HCT116 (cell line): ENCODE measurements at regions of chr1 and their contacts with region 1.

Region 1: GRCh38 chr1:111656086-111657017 is 36.8 kb downstream of the RAP1A start:
- DNase-seq: peak; percentile 57
- ATAC-seq: peak; percentile 62; the same call in 1 of the 2 replicates
- H3K4me3 ChIP-seq: no peak overlapping the region
- H3K27ac ChIP-seq: no peak overlapping the region
- H3K4me1 ChIP-seq: no peaks in the 10 kb centered on the region
- H3K27me3 ChIP-seq: no peaks in the 10 kb centered on the region
- CTCF ChIP-seq: peak; percentile 48 to 75 (median 69)
- POLR2A ChIP-seq: no peak
- RAD21 ChIP-seq: peak; percentile 84

Region 2: DNA sequence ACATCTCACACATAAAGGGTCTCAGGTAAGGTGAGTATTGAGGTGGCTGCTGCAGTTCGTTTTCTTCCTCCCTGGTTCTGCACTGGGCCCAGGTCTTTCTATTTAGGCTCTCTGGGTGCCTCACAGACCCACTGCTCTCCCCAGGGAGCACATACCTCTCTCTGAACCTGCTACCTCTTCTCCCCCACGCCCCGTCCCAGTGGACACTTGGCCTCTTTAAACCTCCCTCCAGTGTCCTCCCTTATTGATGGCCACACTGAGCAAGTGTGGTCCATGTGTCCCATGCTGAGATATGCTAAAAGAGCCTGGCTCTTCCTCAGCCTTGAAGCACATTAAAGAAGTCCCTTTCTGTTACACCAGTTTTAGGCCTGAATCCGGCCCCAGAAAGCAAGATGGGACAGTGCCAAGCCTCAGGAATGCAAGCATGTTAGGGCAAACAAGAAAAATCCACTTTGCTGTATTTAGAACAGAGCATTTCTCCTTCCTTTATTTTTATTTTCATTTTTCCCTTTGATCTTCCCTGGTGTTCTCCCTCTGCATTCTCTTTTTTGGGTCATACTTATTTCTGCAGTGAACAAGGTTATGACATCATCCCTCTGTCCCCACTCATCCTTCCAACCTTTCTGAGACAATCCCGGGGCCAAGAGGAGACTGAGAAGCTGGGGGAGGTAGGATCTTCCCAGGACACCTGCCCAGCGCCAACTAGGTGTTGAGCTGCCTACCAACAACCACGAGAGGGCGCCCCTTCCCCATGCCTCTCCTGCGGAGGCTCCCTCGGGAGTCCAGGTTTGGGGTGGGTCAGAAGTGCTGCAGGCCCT is 433.8 kb before region 1 on chr1:
- CTCF ChIA-PET with region 1: no interaction called
- POLR2A ChIA-PET with region 1: no interaction called
- RAD21 ChIA-PET with region 1: no interaction called
- intact Hi-C with region 1: loop called (anchors 5 kb)
- DNase-seq: peak; percentile 70
- ATAC-seq: peak; percentile 100
- H3K4me3 ChIP-seq: no peak overlapping the region
- H3K27ac ChIP-seq: no peak overlapping the region
- H3K4me1 ChIP-seq: peaks cover 3 to 5% of the 10 kb centered on the region in 2 experiments; a peak in 2 of 4 replicates
- H3K27me3 ChIP-seq: no peaks in the 10 kb centered on the region
- CTCF ChIP-seq: peak; percentile 90 to 98 (median 95)
- POLR2A ChIP-seq: no peak
- RAD21 ChIP-seq: peak; percentile 98

Region 3: GRCh38 chr1:111346089-111346885 is 310.1 kb before region 1 on chr1:
- CTCF ChIA-PET with region 1: no interaction called
- POLR2A ChIA-PET with region 1: no interaction called
- RAD21 ChIA-PET with region 1: no interaction called
- intact Hi-C with region 1: loop called (anchors 10 kb)
- DNase-seq: peak; percentile 58
- ATAC-seq: peak; percentile 94
- H3K4me3 ChIP-seq: peak overlapping the region; percentile 51 to 60
- H3K27ac ChIP-seq: peak overlapping the region; percentile 31; the same call in 1 of the 2 replicates
- H3K4me1 ChIP-seq: peaks cover 6 to 12% of the 10 kb centered on the region in 2 experiments; a peak in 2 of 4 replicates
- H3K27me3 ChIP-seq: no peaks in the 10 kb centered on the region
- CTCF ChIP-seq: 0 out of 6 replicates have a peak, but pooled peaks of 1 of the 3 experiments have one; percentile 5
- POLR2A ChIP-seq: no peak
- RAD21 ChIP-seq: no peak

Region 4: DNA sequence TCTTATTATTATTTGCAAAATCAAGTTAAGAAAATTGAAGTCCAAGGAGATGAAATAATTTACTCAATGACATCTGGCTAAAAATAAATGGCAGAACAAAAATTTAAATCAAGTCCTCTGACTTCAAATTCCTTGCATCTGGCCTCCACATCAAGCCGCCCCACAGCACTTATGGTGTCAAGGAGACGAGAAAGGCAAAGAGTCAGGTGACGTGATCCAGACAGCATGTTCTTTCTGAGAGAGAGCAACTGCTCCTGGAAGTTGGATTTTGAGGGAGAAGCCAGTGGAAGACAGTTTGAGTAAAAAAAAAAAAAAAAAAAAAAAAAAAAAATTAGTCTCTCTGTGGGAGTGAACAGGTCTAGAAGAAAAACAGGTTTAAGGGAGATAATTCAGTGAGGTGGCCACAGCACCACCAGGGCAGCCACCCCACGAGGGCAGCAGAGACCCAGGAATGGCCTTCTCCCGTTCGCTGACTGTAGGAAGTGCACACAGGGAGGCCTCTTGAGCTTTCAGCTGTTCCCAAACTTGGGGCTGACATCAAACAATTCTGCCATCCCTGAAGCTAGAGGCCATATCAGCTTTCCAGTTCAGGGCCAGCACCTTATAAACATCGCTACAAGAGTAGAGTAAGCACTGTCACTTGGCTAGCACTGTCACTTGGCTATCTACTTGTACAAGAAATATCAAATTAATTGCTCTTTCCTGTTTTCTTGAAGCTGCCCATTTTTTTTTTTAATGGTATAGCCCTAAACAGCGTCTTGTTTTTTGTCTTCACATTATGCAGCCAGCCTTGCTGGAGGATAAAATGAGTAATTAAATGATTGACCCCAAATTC is 174.7 kb before region 1 on chr1:
- CTCF ChIA-PET with region 1: interaction called, 3 read pairs
- POLR2A ChIA-PET with region 1: no interaction called
- RAD21 ChIA-PET with region 1: no interaction called
- intact Hi-C with region 1: loop called (anchors 1 kb)
- DNase-seq: peak; percentile 42
- ATAC-seq: peak; percentile 97
- H3K4me3 ChIP-seq: no peak overlapping the region
- H3K27ac ChIP-seq: no peak overlapping the region
- H3K4me1 ChIP-seq: no peaks in the 10 kb centered on the region
- H3K27me3 ChIP-seq: no peaks in the 10 kb centered on the region
- CTCF ChIP-seq: peak; percentile 59 to 84 (median 67)
- POLR2A ChIP-seq: no peak
- RAD21 ChIP-seq: peak; percentile 88

Region 5: DNA sequence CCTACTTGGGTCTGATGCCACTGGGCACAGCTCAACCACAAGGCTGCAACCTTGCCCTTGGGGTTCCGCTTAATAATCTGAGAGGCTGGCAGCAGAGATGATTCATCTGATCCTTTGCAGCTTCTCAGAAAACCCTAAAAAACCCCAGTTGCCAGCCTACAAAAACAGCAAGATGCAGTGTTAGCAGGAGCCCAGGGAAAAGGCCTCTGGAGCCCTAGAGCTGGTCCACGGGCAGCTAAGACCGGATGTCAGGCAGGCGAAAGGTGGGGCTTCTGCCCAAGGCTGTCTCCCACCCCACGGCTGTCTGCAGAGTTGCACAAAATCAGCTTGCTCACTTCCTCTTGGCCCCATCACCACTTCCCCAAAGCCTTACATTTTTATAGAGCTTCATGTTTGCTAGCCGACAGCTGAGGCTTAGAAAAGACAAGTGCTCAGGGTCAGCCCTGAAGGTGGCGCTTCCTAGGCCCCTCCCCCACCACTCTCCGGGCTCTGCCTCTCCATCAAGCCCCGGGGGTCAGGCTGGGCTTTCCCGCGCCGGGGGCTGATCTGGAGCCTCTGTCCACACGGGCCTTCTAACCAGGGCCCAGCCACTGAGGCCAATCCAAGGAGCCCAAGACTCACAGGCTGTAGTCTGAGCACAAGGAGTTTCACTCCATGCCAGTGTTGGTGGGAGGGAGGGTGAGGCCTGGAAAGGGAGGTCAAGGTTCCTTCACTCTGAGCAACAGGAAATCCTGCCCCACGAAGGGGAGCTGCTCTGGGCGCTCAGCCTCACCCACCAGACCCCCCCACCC is 148.7 kb before region 1 on chr1:
- CTCF ChIA-PET with region 1: interaction called, 16 read pairs
- POLR2A ChIA-PET with region 1: interaction called, 3 read pairs
- RAD21 ChIA-PET with region 1: no interaction called
- intact Hi-C with region 1: loop called (anchors 1 kb)
- DNase-seq: no peak
- ATAC-seq: peak; percentile 80
- H3K4me3 ChIP-seq: peak overlapping the region; percentile 2 to 49; a peak in 3 of 4 replicates
- H3K27ac ChIP-seq: peak overlapping the region; percentile 63
- H3K4me1 ChIP-seq: peaks cover 9 to 16% of the 10 kb centered on the region in 2 experiments
- H3K27me3 ChIP-seq: no peaks in the 10 kb centered on the region
- CTCF ChIP-seq: no peak; a peak in 1 of 6 replicates
- POLR2A ChIP-seq: no peak
- RAD21 ChIP-seq: no peak

Region 6: GRCh38 chr1:111672331-111672730 is 16.0 kb after region 1 on chr1:
- CTCF ChIA-PET with region 1: no interaction called
- POLR2A ChIA-PET with region 1: no interaction called
- RAD21 ChIA-PET with region 1: no interaction called
- intact Hi-C with region 1: no loop called
- DNase-seq: no peak
- ATAC-seq: no peak
- H3K4me3 ChIP-seq: no peak overlapping the region
- H3K27ac ChIP-seq: no peak overlapping the region
- H3K4me1 ChIP-seq: no peaks in the 10 kb centered on the region
- H3K27me3 ChIP-seq: no peaks in the 10 kb centered on the region
- CTCF ChIP-seq: no peak
- POLR2A ChIP-seq: no peak
- RAD21 ChIP-seq: no peak